Heart left ventricle (tissue), 16 donors: ENCODE measurements at regions of chr17 and their contacts with region 1.

Region 1: GRCh38 chr17:45261577-45262515 is at the start of gene SPATA32:
- DNase-seq: peak; percentile 60 to 84 (median 70)
- ATAC-seq: peak in 3 of 4 donors; percentile 30 to 43 (median 40)
- H3K4me3 ChIP-seq: peak within 1 kb of the TSS; percentile 27 to 75 (median 64)
- H3K27ac ChIP-seq: peak within 1 kb of the TSS in 10 of 12 donors; percentile 24 to 87 (median 70)
- H3K4me1 ChIP-seq: peaks cover 0 to 41% (median 28%) of the 10 kb centered on the region in 12 donors
- H3K27me3 ChIP-seq: no peaks in the 10 kb centered on the region
- CTCF ChIP-seq: no peak
- POLR2A ChIP-seq: no peak
- total RNA-seq, gene SPATA32: not detected

Region 2: DNA sequence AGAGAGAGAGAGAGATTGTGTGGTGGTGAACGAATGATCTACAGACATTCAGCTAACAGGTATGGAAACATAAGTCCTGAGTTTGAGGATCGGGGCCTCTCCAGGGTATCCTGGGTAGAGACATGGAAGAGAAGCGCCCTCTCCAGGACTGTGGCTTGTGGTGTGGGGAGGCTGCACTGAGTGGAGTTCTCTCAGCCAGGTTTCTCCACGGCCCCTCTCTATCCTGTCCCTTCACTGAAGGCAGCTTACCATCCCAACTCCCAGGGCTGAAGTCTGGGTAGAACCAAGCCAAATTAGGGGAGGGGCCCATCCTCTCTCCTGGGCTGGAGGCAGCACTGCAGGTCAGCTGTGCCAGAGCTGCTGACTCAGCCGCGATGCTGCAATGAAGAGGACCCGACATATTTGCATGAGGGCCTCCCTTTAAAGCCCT is 299.9 kb before region 1 on chr17:
- intact Hi-C with region 1: no loop called
- DNase-seq: no peak
- ATAC-seq: peak in 1 of 4 donors; percentile 20
- H3K4me3 ChIP-seq: no peak overlapping the region
- H3K27ac ChIP-seq: no peak overlapping the region
- H3K4me1 ChIP-seq: peaks cover 0 to 7% (median 1%) of the 10 kb centered on the region in 12 donors
- H3K27me3 ChIP-seq: peaks cover 15 to 76% (median 38%) of the 10 kb centered on the region in 9 donors
- CTCF ChIP-seq: no peak
- POLR2A ChIP-seq: no peak

Region 3: DNA sequence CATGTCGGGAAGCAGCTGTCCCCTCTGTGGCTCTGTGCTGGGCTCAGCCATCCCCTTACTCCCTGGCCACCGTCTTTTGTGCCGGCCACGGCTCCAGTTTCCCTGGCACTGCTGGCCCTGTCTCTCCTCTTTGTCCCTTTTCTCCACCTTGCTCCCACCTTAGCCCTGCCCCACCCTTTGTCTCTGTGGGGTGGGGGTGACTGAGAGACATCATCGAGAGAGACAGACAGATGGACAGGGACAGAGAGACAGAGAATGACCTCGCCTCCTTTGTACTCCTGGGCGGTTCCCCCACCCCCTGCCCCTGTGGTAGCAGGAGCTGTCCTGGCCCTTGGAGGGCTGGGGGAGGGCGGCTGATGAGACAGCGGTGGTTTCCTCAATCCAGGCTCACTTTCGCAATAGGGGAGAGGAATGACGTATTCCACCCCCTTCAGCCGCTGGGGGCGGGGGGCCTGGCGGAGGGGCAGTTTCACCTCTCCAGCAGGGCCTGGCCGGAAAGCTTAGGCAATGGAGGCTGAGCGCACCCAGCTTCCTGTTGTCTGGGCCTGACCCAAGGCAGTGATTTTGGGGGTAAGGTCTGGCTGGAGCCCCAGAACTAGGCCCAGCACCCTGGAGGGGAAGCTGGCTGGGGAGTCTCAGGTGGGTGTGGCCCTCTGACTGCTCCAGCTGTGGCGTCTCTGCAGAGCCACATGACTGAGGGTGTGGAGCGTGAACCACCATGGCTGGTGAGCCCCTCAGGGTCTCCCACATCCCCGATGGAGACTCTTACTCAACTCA is 32.9 kb before region 1 on chr17:
- intact Hi-C with region 1: loop called in 3 of 10 experiments (anchors 5 kb)
- DNase-seq: peak; percentile 86 to 94 (median 91)
- ATAC-seq: peak; percentile 51 to 81 (median 76)
- H3K4me3 ChIP-seq: peak overlapping the region in 4 of 12 donors; percentile 3 to 78 (median 16)
- H3K27ac ChIP-seq: peak overlapping the region; percentile 26 to 98 (median 78)
- H3K4me1 ChIP-seq: peaks cover 0 to 82% (median 56%) of the 10 kb centered on the region in 12 donors
- H3K27me3 ChIP-seq: no peaks in the 10 kb centered on the region
- CTCF ChIP-seq: no peak
- POLR2A ChIP-seq: no peak

Region 4: GRCh38 chr17:45247429-45248131 is 14.3 kb before region 1 on chr17:
- intact Hi-C with region 1: loop called in 1 of 10 experiments (anchors 2 kb)
- DNase-seq: peak; percentile 84 to 91 (median 90)
- ATAC-seq: peak; percentile 79 to 91 (median 86)
- H3K4me3 ChIP-seq: peak overlapping the region; percentile 24 to 63 (median 54)
- H3K27ac ChIP-seq: peak overlapping the region in 10 of 12 donors; percentile 24 to 84 (median 46)
- H3K4me1 ChIP-seq: peaks cover 0 to 35% (median 18%) of the 10 kb centered on the region in 12 donors
- H3K27me3 ChIP-seq: no peaks in the 10 kb centered on the region
- CTCF ChIP-seq: no peak
- POLR2A ChIP-seq: peak in 1 of 2 donors; percentile 17